ENCODE measurements at regions of chr3 and their contacts with region 1.

Region 1: DNA sequence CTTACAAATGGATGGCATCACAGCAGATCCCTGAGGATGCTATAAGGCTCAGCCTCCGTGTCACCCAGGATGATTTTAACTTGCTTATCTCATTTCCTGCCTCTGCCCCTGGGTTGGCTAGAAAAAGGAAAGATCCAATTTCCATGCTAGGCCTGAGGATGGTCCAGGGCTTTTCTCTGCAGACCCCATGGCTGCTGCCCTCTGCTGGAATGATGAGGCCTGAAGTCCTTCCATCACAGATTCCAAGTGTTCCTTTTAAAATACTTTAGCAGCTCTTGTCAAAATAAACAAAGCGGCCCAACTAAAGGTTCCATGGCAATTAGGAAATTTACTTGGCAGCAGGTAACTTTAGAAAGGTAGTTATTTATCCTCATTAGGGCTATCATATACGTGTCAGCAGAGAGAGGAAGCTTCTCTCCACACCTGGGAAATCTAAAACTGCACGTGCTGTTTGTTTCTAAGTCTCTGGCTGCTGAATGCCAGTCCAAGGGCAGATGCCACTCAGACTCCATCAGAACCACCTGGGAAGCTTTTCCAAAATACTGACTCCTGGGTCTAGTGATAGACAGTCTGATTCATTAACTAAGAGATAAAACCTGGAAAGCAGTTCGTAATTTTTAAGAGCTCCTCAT is 401.9 kb upstream of the IL12A start:
- DNase-seq: peak; percentile 41
- H3K4me3 ChIP-seq: no peak overlapping the region
- H3K27ac ChIP-seq: no peak overlapping the region
- H3K4me1 ChIP-seq: no peaks in the 10 kb centered on the region
- H3K27me3 ChIP-seq: peaks cover 4 to 19% of the 10 kb centered on the region in 2 experiments
- CTCF ChIP-seq: peak; percentile 55 to 59
- POLR2A ChIP-seq: no peak

Region 2: GRCh38 chr3:158845765-158846350 is 740.8 kb before region 1 on chr3:
- CTCF ChIA-PET with region 1: interaction called, 3 read pairs
- POLR2A ChIA-PET with region 1: no interaction called
- dilution Hi-C with region 1: no loop called
- intact Hi-C with region 1: loop called (anchors 10 kb)
- DNase-seq: peak; percentile 30
- H3K4me3 ChIP-seq: no peak overlapping the region
- H3K27ac ChIP-seq: no peak overlapping the region
- H3K4me1 ChIP-seq: no peaks in the 10 kb centered on the region
- H3K27me3 ChIP-seq: no peaks in the 10 kb centered on the region
- CTCF ChIP-seq: peak; percentile 49 to 60
- POLR2A ChIP-seq: no peak

Region 3: GRCh38 chr3:159560214-159560979 is 26.3 kb before region 1 on chr3:
- CTCF ChIA-PET with region 1: interaction called, 12 read pairs
- POLR2A ChIA-PET with region 1: no interaction called
- dilution Hi-C with region 1: no loop called
- intact Hi-C with region 1: no loop called
- DNase-seq: no peak
- H3K4me3 ChIP-seq: no peak overlapping the region
- H3K27ac ChIP-seq: no peak overlapping the region
- H3K4me1 ChIP-seq: peaks cover 4% of the 10 kb centered on the region
- H3K27me3 ChIP-seq: peaks cover 2 to 14% of the 10 kb centered on the region in 2 experiments
- CTCF ChIP-seq: no peak
- POLR2A ChIP-seq: no peak